ENCODE measurements at regions of chr13 and their contacts with region 1.

Region 1: GRCh38 chr13:107867701-107868661 is 347.4 kb downstream of the LIG4 start:
- DNase-seq: peak in 1 of 5 donors; percentile 24
- ATAC-seq: peak in 3 of 4 donors; percentile 45 to 54 (median 47)
- H3K4me3 ChIP-seq: peak overlapping the region in 11 of 12 donors; percentile 14 to 58 (median 41)
- H3K27ac ChIP-seq: no peak overlapping the region
- H3K4me1 ChIP-seq: peaks cover 0 to 28% (median 6%) of the 10 kb centered on the region in 12 donors
- H3K27me3 ChIP-seq: peaks cover 19 to 65% (median 34%) of the 10 kb centered on the region in 9 donors
- CTCF ChIP-seq: peak in 5 of 12 donors; percentile 14 to 43 (median 34)
- POLR2A ChIP-seq: no peak

Region 2: GRCh38 chr13:107824635-107825034 is 43.3 kb before region 1 on chr13:
- intact Hi-C with region 1: no loop called
- DNase-seq: no peak
- ATAC-seq: no peak
- H3K4me3 ChIP-seq: no peak overlapping the region
- H3K27ac ChIP-seq: no peak overlapping the region
- H3K4me1 ChIP-seq: no peaks in the 10 kb centered on the region
- H3K27me3 ChIP-seq: no peaks in the 10 kb centered on the region
- CTCF ChIP-seq: no peak
- POLR2A ChIP-seq: no peak

Region 3: GRCh38 chr13:107886118-107886517 is 18.1 kb after region 1 on chr13:
- intact Hi-C with region 1: loop called in 1 of 10 experiments (anchors 2 kb)
- DNase-seq: no peak
- ATAC-seq: no peak
- H3K4me3 ChIP-seq: no peak overlapping the region
- H3K27ac ChIP-seq: no peak overlapping the region
- H3K4me1 ChIP-seq: no peaks in the 10 kb centered on the region
- H3K27me3 ChIP-seq: no peaks in the 10 kb centered on the region
- CTCF ChIP-seq: no peak
- POLR2A ChIP-seq: no peak

Region 4: DNA sequence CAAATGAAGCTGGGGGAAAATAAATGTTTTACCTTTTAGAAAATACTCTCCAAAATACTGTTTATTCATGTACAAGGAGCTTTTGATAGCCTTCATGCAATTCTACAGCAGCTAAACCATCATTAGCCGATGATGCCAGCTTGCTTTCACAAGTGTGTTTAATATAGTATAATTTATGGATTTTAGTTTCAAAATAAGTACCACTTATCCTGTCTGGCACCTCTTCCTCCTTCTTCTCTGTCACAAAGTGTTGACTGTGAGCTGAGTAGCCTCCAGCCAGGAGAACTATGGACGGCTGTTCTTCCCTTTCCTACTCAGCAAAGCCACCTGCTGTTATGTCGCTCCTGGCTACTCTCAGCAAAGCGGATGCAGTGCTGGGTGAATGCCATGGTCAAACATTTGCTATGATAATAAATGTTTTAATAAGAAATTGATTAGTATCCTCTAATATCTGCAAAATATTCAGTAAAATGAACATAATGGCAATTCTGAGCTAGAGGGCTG is 109.1 kb after region 1 on chr13:
- intact Hi-C with region 1: no loop called
- DNase-seq: no peak
- ATAC-seq: no peak
- H3K4me3 ChIP-seq: no peak overlapping the region
- H3K27ac ChIP-seq: no peak overlapping the region
- H3K4me1 ChIP-seq: no peaks in the 10 kb centered on the region
- H3K27me3 ChIP-seq: no peaks in the 10 kb centered on the region
- CTCF ChIP-seq: no peak
- POLR2A ChIP-seq: no peak

Region 5: DNA sequence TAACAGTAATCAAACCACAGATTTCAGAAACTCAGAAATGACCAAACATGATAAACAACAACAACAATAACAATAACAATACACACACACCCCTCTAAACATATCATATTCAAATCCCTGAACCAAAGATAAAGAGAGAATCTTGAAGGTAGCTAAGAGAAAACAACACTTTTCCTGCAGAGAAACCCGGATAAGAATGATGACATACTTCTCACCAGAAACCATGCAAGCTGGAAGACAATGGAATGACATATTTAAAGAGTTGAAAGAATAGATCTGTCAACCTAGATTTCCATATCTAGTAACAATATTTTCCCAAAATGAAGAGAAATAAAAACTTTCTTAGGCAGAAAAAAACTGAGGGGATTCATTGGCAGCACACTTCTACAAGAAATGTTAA is 209.3 kb after region 1 on chr13:
- intact Hi-C with region 1: no loop called
- DNase-seq: no peak
- ATAC-seq: no peak
- H3K4me3 ChIP-seq: no peak overlapping the region
- H3K27ac ChIP-seq: no peak overlapping the region
- H3K4me1 ChIP-seq: no peaks in the 10 kb centered on the region
- H3K27me3 ChIP-seq: no peaks in the 10 kb centered on the region
- CTCF ChIP-seq: no peak
- POLR2A ChIP-seq: no peak